Activated CD8-positive, alpha-beta T cell treated with anti-CD3 and anti-CD28 coated beads for 36 hours (primary cell): ENCODE measurements at regions of chr6 and their contacts with region 1.

Region 1: DNA sequence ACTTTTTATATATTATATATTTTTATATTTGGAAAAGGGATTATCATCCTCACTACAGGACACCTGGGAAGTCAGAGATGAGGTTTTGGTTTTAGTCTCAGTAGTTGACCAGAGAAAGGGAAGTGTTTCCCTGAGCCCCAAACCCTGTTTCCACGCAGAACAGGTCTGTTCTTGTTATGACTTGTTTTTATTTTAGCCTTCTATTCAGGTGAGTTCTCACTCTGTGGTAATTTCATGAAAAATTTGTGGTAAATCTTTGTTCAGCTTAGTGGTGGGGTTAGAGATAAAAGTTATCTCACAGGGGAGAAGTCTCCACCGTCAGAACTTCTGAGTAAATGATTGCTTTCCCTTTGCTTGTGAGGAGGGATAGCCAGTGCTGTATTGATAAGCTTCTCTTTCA is 224.9 kb downstream of the FARS2 start:
- DNase-seq: no peak
- ATAC-seq: peak; percentile 24
- H3K4me3 Mint-ChIP-seq: no peak overlapping the region
- H3K27ac Mint-ChIP-seq: peak overlapping the region; percentile 39
- H3K4me1 Mint-ChIP-seq: peaks cover 17% of the 10 kb centered on the region
- H3K27me3 Mint-ChIP-seq: no peaks in the 10 kb centered on the region
- CTCF ChIP-seq: no peak

Region 2: GRCh38 chr6:5471044-5471443 is 15.2 kb before region 1 on chr6:
- CTCF ChIA-PET with region 1: interaction called, 54 read pairs
- POLR2A ChIA-PET with region 1: no interaction called
- intact Hi-C with region 1: no loop called
- DNase-seq: peak; percentile 84
- ATAC-seq: peak; percentile 84
- H3K4me3 Mint-ChIP-seq: no peak overlapping the region
- H3K27ac Mint-ChIP-seq: no peak overlapping the region
- H3K4me1 Mint-ChIP-seq: peaks cover 3% of the 10 kb centered on the region
- H3K27me3 Mint-ChIP-seq: no peaks in the 10 kb centered on the region
- CTCF ChIP-seq: peak; percentile 85